Activated CD8-positive, alpha-beta T cell treated with anti-CD3 and anti-CD28 coated beads, Interleukin-2, amount 10 ng/mL, durations not matched to agents 7 days and 5 days (primary cell): ENCODE measurements at regions of chr1 and their contacts with region 1.

Region 1: GRCh38 chr1:74733604-74734484 is 892 bp downstream of the TYW3 start:
- DNase-seq: peak; percentile 65
- ATAC-seq: peak; percentile 64
- H3K4me3 Mint-ChIP-seq: peak overlapping the region; percentile 91
- H3K27ac Mint-ChIP-seq: peak overlapping the region; percentile 99
- H3K4me1 Mint-ChIP-seq: peaks cover 25% of the 10 kb centered on the region
- H3K27me3 Mint-ChIP-seq: no peaks in the 10 kb centered on the region

Region 2: GRCh38 chr1:74681449-74681848 is 52.4 kb before region 1 on chr1:
- CTCF ChIA-PET with region 1: interaction called, 10 read pairs
- POLR2A ChIA-PET with region 1: no interaction called
- DNase-seq: no peak
- ATAC-seq: no peak
- H3K4me3 Mint-ChIP-seq: no peak overlapping the region
- H3K27ac Mint-ChIP-seq: no peak overlapping the region
- H3K4me1 Mint-ChIP-seq: no peaks in the 10 kb centered on the region
- H3K27me3 Mint-ChIP-seq: peaks cover 11% of the 10 kb centered on the region